Heart left ventricle (tissue), 16 donors: ENCODE measurements at regions of chrX and their contacts with region 1.

Region 1: GRCh38 chrX:28920554-28920953 is 333.3 kb downstream of the IL1RAPL1 start:
- DNase-seq: no peak
- ATAC-seq: no peak
- H3K4me3 ChIP-seq: no peak overlapping the region
- H3K27ac ChIP-seq: no peak overlapping the region
- H3K4me1 ChIP-seq: peaks cover 0 to 7% (median 0%) of the 10 kb centered on the region in 12 donors
- H3K27me3 ChIP-seq: no peaks in the 10 kb centered on the region
- CTCF ChIP-seq: no peak
- POLR2A ChIP-seq: no peak

Region 2: GRCh38 chrX:28960064-28960463 is 39.5 kb after region 1 on chrX:
- intact Hi-C with region 1: no loop called
- DNase-seq: no peak
- ATAC-seq: no peak
- H3K4me3 ChIP-seq: no peak overlapping the region
- H3K27ac ChIP-seq: no peak overlapping the region
- H3K4me1 ChIP-seq: no peaks in the 10 kb centered on the region
- H3K27me3 ChIP-seq: no peaks in the 10 kb centered on the region
- CTCF ChIP-seq: no peak
- POLR2A ChIP-seq: no peak

Region 3: DNA sequence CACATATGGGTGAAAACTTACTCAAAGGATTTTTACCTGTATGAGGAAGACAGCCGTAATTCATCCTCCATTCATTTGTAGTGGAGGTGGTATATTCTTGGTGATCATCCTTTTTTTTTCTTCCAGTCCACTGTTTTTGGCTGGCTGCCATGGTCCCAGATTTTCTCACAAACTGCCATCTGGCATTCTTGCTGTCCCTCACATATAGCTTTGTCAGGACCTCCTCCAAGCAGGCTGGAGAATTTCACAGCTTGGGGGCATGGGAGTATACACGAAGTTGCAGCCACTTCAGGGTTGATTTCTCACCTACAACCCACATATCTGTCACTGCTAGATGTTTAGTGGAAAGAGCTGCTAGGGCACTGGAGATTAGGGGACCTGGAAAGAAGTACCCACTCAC is 67.7 kb after region 1 on chrX:
- intact Hi-C with region 1: loop called in 1 of 10 experiments (anchors 10 kb)
- DNase-seq: no peak
- ATAC-seq: no peak
- H3K4me3 ChIP-seq: no peak overlapping the region
- H3K27ac ChIP-seq: no peak overlapping the region
- H3K4me1 ChIP-seq: no peaks in the 10 kb centered on the region
- H3K27me3 ChIP-seq: no peaks in the 10 kb centered on the region
- CTCF ChIP-seq: no peak
- POLR2A ChIP-seq: no peak

Region 4: DNA sequence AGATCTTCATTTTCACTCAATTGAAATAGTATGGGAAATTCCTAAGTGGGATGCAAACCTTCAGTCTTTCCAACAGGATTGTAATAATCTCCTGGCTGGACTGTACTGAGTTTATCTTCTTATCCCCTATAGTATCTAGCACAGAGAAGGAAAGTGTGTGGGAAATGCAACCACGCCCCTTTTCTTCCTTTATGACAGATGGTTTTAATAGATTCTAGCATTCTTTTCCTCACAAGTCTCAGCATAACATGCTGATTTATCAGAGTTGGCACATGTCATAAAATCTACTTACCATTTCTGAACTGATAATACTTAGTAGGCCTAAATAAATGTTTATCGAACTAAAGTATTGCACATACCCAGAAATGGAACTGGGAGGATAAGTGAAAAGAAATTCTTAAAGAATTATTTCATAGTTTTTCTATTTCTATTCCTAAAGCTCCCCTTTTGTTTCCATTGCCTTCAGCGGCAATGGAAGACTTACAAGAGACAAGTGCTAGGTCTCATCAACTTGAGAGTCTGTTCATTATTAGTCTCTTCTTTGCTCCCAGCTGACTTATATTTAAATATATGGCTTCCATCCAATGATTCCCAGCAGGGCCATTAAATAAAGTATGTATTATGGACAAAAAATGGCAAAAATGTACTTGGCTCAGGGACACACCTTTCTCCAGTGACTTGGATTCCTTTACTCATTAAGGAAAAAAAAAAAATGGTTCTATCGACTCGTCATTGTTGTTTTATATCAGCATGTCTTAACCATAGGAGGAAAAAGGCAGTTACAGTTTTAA is 151.2 kb after region 1 on chrX:
- intact Hi-C with region 1: no loop called
- DNase-seq: no peak
- ATAC-seq: no peak
- H3K4me3 ChIP-seq: no peak overlapping the region
- H3K27ac ChIP-seq: no peak overlapping the region
- H3K4me1 ChIP-seq: no peaks in the 10 kb centered on the region
- H3K27me3 ChIP-seq: no peaks in the 10 kb centered on the region
- CTCF ChIP-seq: no peak
- POLR2A ChIP-seq: no peak

Region 5: GRCh38 chrX:29281078-29281742 is 360.7 kb after region 1 on chrX:
- intact Hi-C with region 1: no loop called
- DNase-seq: no peak
- ATAC-seq: no peak
- H3K4me3 ChIP-seq: no peak overlapping the region
- H3K27ac ChIP-seq: no peak overlapping the region
- H3K4me1 ChIP-seq: no peaks in the 10 kb centered on the region
- H3K27me3 ChIP-seq: no peaks in the 10 kb centered on the region
- CTCF ChIP-seq: no peak
- POLR2A ChIP-seq: no peak